ENCODE measurements at regions of chr7 and their contacts with region 1.

Region 1: DNA sequence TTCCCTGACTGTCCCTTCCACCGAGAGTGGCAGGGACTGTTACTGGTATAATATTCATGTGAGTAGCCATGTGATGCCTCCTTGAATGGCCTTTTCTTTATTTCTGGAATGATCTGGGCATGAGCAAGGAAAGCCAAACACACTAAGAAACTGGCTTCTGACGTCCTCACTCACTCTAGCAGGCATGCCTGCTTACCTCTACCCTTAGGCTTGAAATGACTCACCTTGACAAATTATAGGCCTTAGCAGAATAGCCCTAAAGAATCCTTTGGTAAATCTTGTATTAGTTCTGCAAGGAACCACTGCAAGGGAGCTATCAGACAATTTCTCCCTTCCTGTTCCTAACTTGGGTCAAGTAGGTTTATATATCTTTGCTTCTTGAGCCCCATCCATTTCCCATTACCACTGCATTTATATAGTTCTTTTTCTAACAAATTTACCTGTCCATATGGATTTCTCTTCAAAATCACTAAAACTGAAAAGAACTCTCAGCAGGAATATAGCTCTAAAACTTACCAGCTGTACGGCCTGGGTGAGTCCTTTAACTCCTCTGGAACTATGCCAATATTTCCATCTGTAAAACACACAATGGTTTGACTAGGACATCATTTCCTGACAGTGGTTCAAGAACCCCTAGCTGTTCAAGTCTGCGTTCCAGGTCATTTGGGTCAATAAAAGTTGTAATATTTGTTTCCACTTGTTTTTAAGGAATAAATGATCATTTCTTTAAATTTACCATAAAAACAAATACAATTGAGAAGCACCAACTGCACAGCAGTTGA is 13.0 kb upstream of the NDUFA5 start:
- DNase-seq: no peak
- H3K4me3 ChIP-seq: no peak overlapping the region
- H3K27ac ChIP-seq: no peak overlapping the region
- H3K4me1 ChIP-seq: no peaks in the 10 kb centered on the region
- CTCF ChIP-seq: no peak

Region 2: GRCh38 chr7:123557398-123558288 is 12.9 kb before region 1 on chr7 and contains the start of gene NDUFA5:
- CTCF ChIA-PET with region 1: no interaction called
- POLR2A ChIA-PET with region 1: interaction called, 10 read pairs
- intact Hi-C with region 1: no loop called
- DNase-seq: peak; percentile 99
- H3K4me3 ChIP-seq: peak within 1 kb of the TSS; percentile 92
- H3K27ac ChIP-seq: peak within 1 kb of the TSS; percentile 49
- H3K4me1 ChIP-seq: peaks cover 15% of the 10 kb centered on the region
- CTCF ChIP-seq: no peak
- total RNA-seq, gene NDUFA5: 42.6 and 50.8 TPM in 2 replicates